AG04450 (cell line): ENCODE measurements at regions of chr15 and their contacts with region 1.

Region 1: DNA sequence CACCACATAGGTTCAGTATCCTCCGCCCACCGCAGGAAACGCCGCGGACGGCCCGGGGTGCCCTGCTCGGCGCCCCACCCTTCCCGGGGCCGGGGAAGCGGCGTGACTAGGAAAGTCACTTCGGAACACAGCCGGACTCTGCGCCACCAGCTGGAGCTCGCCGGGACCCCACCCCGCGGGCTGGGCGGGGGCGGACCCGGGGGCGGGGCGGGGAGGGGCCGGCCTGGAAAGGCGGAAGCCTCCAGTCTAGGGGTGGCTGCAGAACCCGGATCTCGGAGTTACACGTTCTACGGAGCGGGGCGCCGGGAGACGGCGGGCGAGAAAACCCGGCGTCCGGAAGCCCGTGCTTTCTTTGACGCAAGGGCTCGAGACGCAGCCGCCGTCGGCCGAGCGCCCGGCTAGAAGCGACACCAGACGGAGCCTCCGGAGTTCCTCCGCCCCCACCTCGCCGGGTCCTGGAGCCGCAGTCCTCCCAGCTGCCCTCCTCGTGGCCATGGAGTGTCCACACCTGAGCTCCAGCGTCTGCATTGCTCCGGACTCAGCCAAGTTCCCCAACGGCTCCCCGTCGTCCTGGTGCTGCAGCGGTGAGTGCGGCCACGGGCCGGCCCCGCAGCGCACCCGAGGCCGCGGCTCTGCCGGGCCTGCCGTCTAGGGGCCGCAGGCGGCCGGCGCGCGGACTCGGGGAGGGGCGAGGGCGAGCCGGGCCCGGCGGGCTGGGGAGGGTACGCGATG is at the start of gene USP3:
- DNase-seq: peak; percentile 92
- H3K4me3 ChIP-seq: peak within 1 kb of the TSS; percentile 90
- H3K27ac ChIP-seq: peak within 1 kb of the TSS; percentile 99
- H3K27me3 ChIP-seq: no peaks in the 10 kb centered on the region
- CTCF ChIP-seq: peak; percentile 19; the same call in 1 of the 2 replicates
- polyA plus RNA-seq, gene USP3: 24.0 and 30.7 TPM in 2 replicates

Region 2: DNA sequence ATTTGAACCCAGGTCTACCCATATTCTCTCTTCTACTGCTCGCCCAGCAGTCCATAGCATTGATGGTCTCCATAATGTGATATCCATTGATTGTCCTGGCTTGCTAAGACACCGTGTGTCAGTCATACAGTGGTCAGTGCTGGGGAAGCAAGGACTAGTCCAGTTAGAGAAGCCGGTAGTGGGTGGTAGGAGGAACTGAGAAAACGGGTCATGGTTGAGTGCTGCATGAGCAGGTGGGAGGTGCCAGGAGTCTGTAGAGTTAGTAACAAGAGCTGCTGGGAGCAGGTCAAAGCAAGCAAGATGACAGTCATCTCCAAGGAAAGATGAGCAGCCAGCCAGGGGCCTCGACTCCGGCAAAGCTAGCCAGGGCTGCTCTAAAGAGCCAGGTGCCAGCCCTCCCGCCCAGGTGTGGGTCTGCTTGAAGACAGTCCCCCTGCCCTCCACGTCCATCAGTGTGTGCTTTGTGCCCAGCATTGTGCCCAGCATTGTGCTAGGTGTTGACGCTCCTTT is 29.5 kb before region 1 on chr15:
- CTCF ChIA-PET with region 1: interaction called, 4 read pairs
- POLR2A ChIA-PET with region 1: interaction called, 11 read pairs
- DNase-seq: no peak
- H3K4me3 ChIP-seq: no peak overlapping the region
- H3K27ac ChIP-seq: no peak overlapping the region
- H3K27me3 ChIP-seq: no peaks in the 10 kb centered on the region
- CTCF ChIP-seq: no peak

Region 3: DNA sequence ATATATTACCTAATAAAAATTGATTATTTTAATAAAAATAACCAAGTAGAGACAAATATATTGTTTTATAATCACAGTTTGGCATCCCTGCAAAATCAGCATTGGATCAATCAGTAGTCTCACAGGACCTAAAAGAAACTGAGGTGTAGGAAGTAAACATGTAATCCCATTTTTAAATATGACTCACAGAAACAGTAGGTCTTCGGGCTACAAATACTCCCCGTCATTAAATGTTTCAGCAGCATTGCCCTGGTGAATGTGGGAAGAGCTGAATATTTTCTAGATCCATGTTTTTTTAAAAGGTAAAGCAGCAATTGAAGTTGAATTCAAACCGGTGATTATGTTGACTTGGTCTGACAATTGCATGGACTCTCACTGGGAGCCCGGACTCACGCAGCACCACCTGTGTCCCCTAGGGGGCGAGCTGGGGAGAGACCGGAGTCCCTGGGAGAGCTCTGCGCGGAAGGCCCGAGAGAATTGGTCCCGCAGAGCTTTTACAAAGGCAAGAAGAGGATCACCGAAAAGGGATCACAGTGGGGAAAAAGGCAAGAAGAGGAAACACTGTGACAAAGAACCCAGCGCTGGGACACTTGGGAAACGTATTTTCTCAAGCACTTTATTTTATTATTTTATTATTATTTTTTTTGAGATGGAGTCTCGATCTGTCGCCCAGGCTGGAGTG is 17.2 kb before region 1 on chr15:
- CTCF ChIA-PET with region 1: interaction called, 13 read pairs
- POLR2A ChIA-PET with region 1: interaction called, 3 read pairs
- DNase-seq: no peak
- H3K4me3 ChIP-seq: no peak overlapping the region
- H3K27ac ChIP-seq: no peak overlapping the region
- H3K27me3 ChIP-seq: no peaks in the 10 kb centered on the region
- CTCF ChIP-seq: peak; percentile 90

Region 4: GRCh38 chr15:63582718-63583426 is 78.5 kb after region 1 on chr15:
- CTCF ChIA-PET with region 1: no interaction called
- POLR2A ChIA-PET with region 1: no interaction called
- DNase-seq: no peak
- H3K4me3 ChIP-seq: no peak overlapping the region
- H3K27ac ChIP-seq: peak overlapping the region; percentile 41
- H3K27me3 ChIP-seq: no peaks in the 10 kb centered on the region
- CTCF ChIP-seq: no peak